ENCODE measurements at regions of chr1 and their contacts with region 1.

Region 1: GRCh38 chr1:60510162-60510561 is 436.6 kb upstream of the C1orf87 start:
- DNase-seq: no peak
- ATAC-seq: no peak
- H3K4me3 ChIP-seq: no peak overlapping the region
- H3K27ac ChIP-seq: no peak overlapping the region
- H3K4me1 ChIP-seq: peaks cover 0 to 3% (median 0%) of the 10 kb centered on the region in 12 donors
- H3K27me3 ChIP-seq: no peaks in the 10 kb centered on the region
- CTCF ChIP-seq: no peak
- POLR2A ChIP-seq: no peak

Region 2: DNA sequence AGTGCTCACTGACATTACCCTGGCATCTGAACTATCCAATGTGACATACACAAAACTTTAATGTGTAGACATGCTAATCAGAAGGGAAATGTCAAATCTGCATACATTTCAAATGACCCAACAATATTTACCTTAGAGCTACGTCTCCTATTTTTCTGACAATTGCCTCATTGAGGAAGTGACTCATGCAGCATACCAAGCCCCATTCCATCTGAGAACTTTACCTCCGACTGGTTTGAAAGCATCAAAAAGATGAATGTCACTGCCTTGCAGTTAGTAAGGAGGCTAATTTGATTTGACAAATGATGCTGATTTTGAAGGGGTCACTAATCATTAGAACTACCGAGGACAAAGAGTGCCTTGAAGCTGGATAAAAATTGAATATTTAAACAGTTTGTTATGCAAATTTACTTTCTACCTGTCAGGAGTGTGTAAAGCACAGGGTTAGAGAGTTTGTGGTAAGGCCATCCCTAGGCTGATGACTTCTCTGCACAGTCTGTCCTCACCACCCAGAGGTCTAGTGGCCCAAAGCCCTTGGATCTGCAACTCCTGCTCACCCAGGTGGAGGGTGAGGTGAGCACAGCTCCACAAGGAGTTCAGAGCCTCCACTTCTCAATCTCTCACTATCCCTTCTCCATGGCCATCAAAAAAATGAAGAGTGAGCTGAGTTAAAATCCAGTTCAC is 63.7 kb after region 1 on chr1:
- intact Hi-C with region 1: loop called in 1 of 10 experiments (anchors 10 kb)
- DNase-seq: no peak
- ATAC-seq: no peak
- H3K4me3 ChIP-seq: no peak overlapping the region
- H3K27ac ChIP-seq: peak overlapping the region in 2 of 12 donors; percentile 26 to 29
- H3K4me1 ChIP-seq: peaks cover 0 to 17% (median 8%) of the 10 kb centered on the region in 12 donors
- H3K27me3 ChIP-seq: no peaks in the 10 kb centered on the region
- CTCF ChIP-seq: no peak
- POLR2A ChIP-seq: no peak

Region 3: DNA sequence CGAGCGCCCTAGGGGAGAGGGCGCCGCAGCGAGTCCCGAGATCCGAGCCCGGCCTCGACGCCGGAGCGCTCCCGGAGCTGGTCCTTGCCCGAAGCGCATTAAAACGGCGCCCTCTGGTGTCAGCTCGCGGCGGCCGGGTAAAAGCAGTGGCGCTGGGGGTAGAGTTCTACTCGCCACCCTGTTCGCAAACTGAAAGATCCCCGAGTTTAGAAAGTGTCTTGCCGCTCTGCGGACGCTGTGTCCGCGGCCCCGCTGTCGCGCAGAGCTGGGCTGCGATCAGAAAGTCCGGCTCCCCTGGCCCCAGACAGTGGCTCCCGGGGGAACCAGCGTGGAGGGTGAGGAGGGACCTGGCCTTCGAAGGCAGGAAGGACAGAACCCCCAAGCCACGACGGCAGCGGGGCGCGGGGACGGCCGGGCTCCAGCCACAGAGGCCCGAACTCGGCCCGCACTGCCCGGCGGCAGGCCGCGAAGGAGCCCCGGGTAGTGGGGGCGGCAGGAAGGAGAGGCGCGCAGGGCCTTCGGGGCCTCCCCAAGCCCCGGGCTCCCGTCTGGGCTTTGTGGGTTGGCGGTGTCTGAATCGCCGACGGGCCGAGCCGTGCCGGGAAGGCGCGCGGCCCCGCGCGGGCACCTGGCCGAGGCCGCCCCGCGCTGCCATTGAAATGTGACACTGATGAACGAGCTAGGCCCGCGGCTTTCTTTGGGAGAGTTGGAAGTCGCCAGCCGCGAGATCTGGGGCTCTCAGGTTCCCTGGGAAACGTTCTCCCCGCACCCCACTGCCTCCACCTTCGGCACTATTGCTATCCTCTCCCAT is 533.1 kb after region 1 on chr1:
- intact Hi-C with region 1: no loop called
- DNase-seq: peak; percentile 89 to 95 (median 90)
- ATAC-seq: peak; percentile 87 to 97 (median 96)
- H3K4me3 ChIP-seq: peak overlapping the region; percentile 28 to 67 (median 59)
- H3K27ac ChIP-seq: peak overlapping the region in 10 of 12 donors; percentile 22 to 82 (median 72)
- H3K4me1 ChIP-seq: peaks cover 0 to 11% (median 4%) of the 10 kb centered on the region in 12 donors
- H3K27me3 ChIP-seq: no peaks in the 10 kb centered on the region
- CTCF ChIP-seq: peak; percentile 86 to 94 (median 92)
- POLR2A ChIP-seq: no peak

Measured in heart left ventricle (tissue), 16 donors.